OCI-LY7 (cell line): ENCODE measurements at regions of chr17 and their contacts with region 1.

Region 1: GRCh38 chr17:45228763-45229539 is 7.3 kb downstream of the FMNL1 start:
- DNase-seq: peak; percentile 67
- H3K4me3 ChIP-seq: peak overlapping the region; percentile 96
- H3K27ac ChIP-seq: peak overlapping the region; percentile 97
- H3K4me1 ChIP-seq: peaks cover 75% of the 10 kb centered on the region
- CTCF ChIP-seq: no peak

Region 2: GRCh38 chr17:45184144-45184543 is 44.8 kb before region 1 on chr17:
- CTCF ChIA-PET with region 1: no interaction called
- POLR2A ChIA-PET with region 1: no interaction called
- intact Hi-C with region 1: no loop called
- DNase-seq: no peak
- H3K4me3 ChIP-seq: no peak overlapping the region
- H3K27ac ChIP-seq: no peak overlapping the region
- H3K4me1 ChIP-seq: peaks cover 5% of the 10 kb centered on the region
- CTCF ChIP-seq: no peak

Region 3: GRCh38 chr17:45247429-45248131 is 18.6 kb after region 1 on chr17:
- CTCF ChIA-PET with region 1: interaction called, 3 read pairs
- POLR2A ChIA-PET with region 1: interaction called, 3 read pairs
- intact Hi-C with region 1: loop called (anchors 2 kb)
- DNase-seq: peak; percentile 94
- H3K4me3 ChIP-seq: peak overlapping the region; percentile 91
- H3K27ac ChIP-seq: peak overlapping the region; percentile 80
- H3K4me1 ChIP-seq: peaks cover 21% of the 10 kb centered on the region
- CTCF ChIP-seq: no peak